Endothelial cell of umbilical vein (primary cell): ENCODE measurements at regions of chr10 and their contacts with region 1.

Region 1: GRCh38 chr10:34389801-34390200 is 425.3 kb downstream of the PARD3 start:
- DNase-seq: no peak
- H3K4me3 ChIP-seq: no peak overlapping the region
- H3K27ac ChIP-seq: no peak overlapping the region
- H3K4me1 ChIP-seq: no peaks in the 10 kb centered on the region
- H3K27me3 ChIP-seq: no peaks in the 10 kb centered on the region
- CTCF ChIP-seq: no peak
- POLR2A ChIP-seq: no peak

Region 2: DNA sequence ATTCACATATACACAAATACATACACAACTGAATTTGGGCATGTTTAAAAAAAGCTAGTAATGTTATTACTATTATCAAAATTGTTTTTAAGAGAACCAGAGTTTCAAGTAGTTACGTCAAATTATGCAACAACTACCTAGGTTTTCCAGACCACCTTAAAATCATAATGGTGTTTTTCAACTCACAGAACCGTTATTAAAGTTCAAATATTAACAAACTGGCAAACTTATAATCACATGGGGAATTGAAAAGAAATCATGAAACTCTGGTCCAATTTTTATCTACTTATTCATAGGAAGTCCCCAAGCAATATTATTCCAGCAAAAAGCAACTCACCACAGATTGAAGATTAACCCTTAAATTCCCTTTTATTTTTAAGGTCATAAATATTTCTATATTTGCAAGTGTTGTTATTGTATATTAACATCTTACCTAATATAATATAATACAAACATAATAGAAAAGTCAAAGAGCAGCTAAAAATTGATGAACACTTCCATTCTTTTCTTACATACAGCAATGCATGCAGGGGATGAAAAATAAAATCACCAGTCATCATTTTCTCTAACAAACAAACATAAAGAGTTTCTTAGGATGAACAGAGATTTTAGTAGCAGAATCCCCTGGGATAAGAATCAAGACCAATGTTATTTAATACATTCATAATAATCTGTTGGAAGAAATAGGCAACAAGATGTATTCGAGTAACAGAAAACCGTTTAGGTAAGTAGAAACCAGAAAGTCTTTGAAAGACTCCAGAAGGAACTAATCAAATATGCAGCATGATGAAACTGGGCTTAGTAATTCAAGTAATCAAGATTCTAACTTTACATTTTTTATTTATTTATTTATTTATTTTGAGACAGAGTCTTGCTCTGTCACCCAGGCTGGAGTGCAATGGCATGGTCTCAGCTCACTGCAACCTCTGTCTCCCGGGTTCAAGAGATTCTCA is 34.1 kb after region 1 on chr10:
- CTCF ChIA-PET with region 1: no interaction called
- POLR2A ChIA-PET with region 1: no interaction called
- dilution Hi-C with region 1: no loop called
- intact Hi-C with region 1: loop called (anchors 1 kb)
- DNase-seq: no peak
- H3K4me3 ChIP-seq: no peak overlapping the region
- H3K27ac ChIP-seq: no peak overlapping the region
- H3K4me1 ChIP-seq: no peaks in the 10 kb centered on the region
- H3K27me3 ChIP-seq: no peaks in the 10 kb centered on the region
- CTCF ChIP-seq: no peak
- POLR2A ChIP-seq: no peak

Region 3: DNA sequence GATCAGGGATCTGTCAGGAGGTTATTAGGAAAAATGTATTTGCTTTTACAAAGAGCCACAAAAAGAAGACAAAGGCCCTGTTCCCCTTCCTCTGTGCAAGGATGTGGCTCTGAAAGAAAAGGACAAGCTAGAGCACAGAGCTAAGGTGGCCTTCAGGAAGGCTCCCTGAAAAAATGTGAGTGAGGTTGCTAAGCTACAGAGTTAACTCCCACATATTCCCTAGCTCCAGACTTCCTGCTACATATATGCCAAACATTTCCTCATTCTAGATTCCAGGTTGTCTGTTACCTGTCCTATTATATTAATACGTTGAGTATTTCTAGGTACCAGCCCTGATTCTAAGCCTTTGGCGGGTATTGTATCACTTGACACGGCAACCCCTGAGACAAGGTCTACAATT is 56.2 kb after region 1 on chr10:
- CTCF ChIA-PET with region 1: no interaction called
- POLR2A ChIA-PET with region 1: no interaction called
- dilution Hi-C with region 1: no loop called
- intact Hi-C with region 1: no loop called
- DNase-seq: no peak
- H3K4me3 ChIP-seq: no peak overlapping the region
- H3K27ac ChIP-seq: no peak overlapping the region
- H3K4me1 ChIP-seq: no peaks in the 10 kb centered on the region
- H3K27me3 ChIP-seq: no peaks in the 10 kb centered on the region
- CTCF ChIP-seq: no peak
- POLR2A ChIP-seq: no peak